ENCODE measurements at regions of chr11 and their contacts with region 1.

Region 1: GRCh38 chr11:2305140-2305840 is 3.5 kb downstream of the TSPAN32 start:
- DNase-seq: peak; percentile 88 to 92
- ATAC-seq: peak; percentile 33 to 73 (median 51)
- H3K4me3 ChIP-seq: peak overlapping the region in 5 of 10 donors; percentile 20 to 34 (median 27)
- H3K27ac ChIP-seq: peak overlapping the region; percentile 8 to 96 (median 90)
- H3K4me1 ChIP-seq: peaks cover 21 to 64% (median 38%) of the 10 kb centered on the region in 9 donors
- H3K27me3 ChIP-seq: no peaks in the 10 kb centered on the region
- CTCF ChIP-seq: peak; percentile 80 to 96 (median 93)

Region 2: GRCh38 chr11:2196970-2197770 is 108.1 kb before region 1 on chr11:
- intact Hi-C with region 1: loop called in 5 of 10 experiments (anchors 1 to 5 kb)
- DNase-seq: peak; percentile 66 to 76
- ATAC-seq: peak; percentile 59 to 86 (median 80)
- H3K4me3 ChIP-seq: no peak overlapping the region
- H3K27ac ChIP-seq: no peak overlapping the region
- H3K4me1 ChIP-seq: peaks cover 0 to 11% (median 0%) of the 10 kb centered on the region in 9 donors
- H3K27me3 ChIP-seq: peaks cover 0 to 12% (median 7%) of the 10 kb centered on the region in 7 donors
- CTCF ChIP-seq: peak; percentile 53 to 85 (median 81)

Region 3: DNA sequence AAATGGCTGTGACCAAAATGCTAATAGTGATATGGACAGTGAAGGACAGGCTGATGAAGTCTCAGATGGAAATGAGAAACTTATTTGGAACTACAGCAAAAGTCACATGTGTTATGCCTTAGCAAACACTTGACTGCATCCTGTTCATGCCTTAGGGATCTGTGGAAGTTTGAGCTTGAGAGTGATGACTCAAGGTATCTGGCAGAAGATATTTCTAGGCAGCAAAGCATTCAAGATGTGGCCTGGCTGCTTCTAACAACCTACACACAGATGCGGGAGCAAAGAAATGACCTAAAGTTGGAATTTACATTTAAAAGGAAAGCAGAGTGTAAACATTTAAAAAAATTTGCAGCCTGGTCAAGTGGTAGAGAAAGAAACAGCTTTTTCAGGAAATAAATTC is 43.7 kb after region 1 on chr11:
- intact Hi-C with region 1: no loop called
- DNase-seq: no peak
- ATAC-seq: no peak
- H3K4me3 ChIP-seq: no peak overlapping the region
- H3K27ac ChIP-seq: no peak overlapping the region
- H3K4me1 ChIP-seq: no peaks in the 10 kb centered on the region
- H3K27me3 ChIP-seq: no peaks in the 10 kb centered on the region
- CTCF ChIP-seq: no peak

Region 4: DNA sequence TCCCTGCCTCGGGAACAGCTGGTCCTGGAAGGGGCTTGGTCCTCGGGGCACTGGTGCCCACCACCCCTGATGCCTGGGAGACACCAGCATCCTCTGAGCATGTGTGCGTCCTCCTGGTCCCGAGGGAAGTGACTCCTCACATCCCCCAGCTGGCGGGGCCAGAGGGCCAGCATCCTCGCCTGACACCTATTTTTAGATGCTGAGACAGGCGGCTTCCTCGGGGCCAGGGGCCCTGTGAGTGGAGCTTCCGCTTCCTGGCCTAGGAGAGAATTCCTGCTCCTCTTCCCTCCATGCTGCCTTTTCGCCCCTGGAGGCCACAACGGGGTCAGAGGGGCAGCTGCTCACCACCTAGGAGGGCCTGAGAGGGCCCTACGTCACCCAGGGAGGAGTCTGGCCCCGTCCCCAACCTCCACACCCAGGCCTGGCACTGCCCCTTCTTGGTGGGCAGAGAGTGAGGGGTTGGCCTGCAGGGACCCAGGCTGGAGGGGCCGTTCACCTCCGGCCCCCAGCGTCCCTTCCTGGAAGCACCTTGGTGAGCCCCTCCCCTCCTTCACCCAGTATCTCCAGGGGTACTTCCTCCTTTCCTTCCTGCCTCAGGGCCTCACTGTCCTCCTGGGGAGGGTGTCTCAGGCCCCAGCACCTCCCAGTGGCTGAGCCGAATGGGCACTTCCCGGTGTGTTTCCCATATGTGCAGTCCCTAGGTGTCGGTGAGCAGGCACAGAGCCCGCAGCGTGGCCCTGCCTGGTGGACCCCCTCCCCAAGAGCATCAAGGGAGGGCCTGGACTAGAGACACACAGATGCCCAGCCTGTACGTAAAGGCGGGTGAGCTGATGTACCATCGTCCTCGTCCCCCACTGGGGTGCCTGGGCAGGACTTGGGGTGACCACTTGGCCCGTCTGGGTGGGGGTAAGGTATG is 77.9 kb after region 1 on chr11:
- intact Hi-C with region 1: loop called in 5 of 10 experiments (anchors 5 to 10 kb)
- DNase-seq: peak; percentile 79 to 88
- ATAC-seq: peak; percentile 45 to 74 (median 64)
- H3K4me3 ChIP-seq: peak overlapping the region in 7 of 10 donors; percentile 10 to 35 (median 25)
- H3K27ac ChIP-seq: peak overlapping the region; percentile 76 to 100 (median 98)
- H3K4me1 ChIP-seq: peaks cover 73 to 97% (median 91%) of the 10 kb centered on the region in 9 donors
- H3K27me3 ChIP-seq: no peaks in the 10 kb centered on the region
- CTCF ChIP-seq: peak in 5 of 9 donors; percentile 11 to 47 (median 28)

Region 5: GRCh38 chr11:2409611-2410468 is 104.5 kb after region 1 on chr11:
- intact Hi-C with region 1: loop called in 2 of 10 experiments (anchors 5 kb)
- DNase-seq: no peak
- ATAC-seq: no peak
- H3K4me3 ChIP-seq: no peak overlapping the region
- H3K27ac ChIP-seq: no peak overlapping the region
- H3K4me1 ChIP-seq: no peaks in the 10 kb centered on the region
- H3K27me3 ChIP-seq: no peaks in the 10 kb centered on the region
- CTCF ChIP-seq: no peak

Region 6: DNA sequence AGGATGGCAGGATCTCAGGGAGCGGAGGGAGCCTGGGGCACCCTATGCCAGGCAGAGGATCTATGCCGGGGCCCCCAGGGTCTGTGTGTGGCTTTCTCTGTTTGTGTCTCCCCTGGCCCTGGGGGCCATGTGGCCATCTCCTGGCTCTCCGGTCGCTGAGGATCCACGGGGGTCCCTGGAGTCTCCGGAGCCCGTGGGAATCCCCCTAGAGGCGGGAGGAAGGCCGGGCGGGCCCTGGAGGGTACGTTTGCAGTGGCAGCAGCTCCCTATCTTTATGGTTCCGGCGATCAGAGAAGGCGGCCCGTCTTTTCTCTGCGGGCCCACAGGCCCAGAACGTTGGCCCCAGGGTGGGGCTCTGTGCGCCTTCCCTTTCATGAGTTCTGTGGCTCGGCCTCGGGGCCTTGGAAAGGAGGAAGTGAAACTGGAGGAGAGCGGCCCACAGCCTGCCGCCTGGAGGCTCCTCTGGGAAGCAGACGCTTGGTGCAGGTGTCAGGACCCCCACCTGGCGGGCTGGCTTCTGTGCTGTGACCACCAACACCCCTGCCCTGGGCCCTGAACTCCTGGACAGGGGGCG is 221.6 kb after region 1 on chr11:
- intact Hi-C with region 1: loop called in 6 of 10 experiments (anchors 10 kb)
- DNase-seq: peak; percentile 39 to 54
- ATAC-seq: peak in 6 of 8 donors; percentile 19 to 47 (median 30)
- H3K4me3 ChIP-seq: peak overlapping the region in 6 of 10 donors; percentile 2 to 34 (median 16)
- H3K27ac ChIP-seq: peak overlapping the region in 4 of 10 donors; percentile 39 to 64 (median 47)
- H3K4me1 ChIP-seq: peaks cover 7 to 30% (median 20%) of the 10 kb centered on the region in 9 donors
- H3K27me3 ChIP-seq: no peaks in the 10 kb centered on the region
- CTCF ChIP-seq: peak in 4 of 9 donors; percentile 19 to 32 (median 24)

Region 7: GRCh38 chr11:2885676-2886081 is 580.4 kb after region 1 on chr11 and contains the start of gene CDKN1C:
- intact Hi-C with region 1: loop called in 5 of 10 experiments (anchors 5 to 10 kb)
- DNase-seq: peak; percentile 88 to 91
- ATAC-seq: peak; percentile 72 to 84 (median 80)
- H3K4me3 ChIP-seq: peak within 1 kb of the TSS; percentile 63 to 89 (median 78)
- H3K27ac ChIP-seq: peak within 1 kb of the TSS; percentile 80 to 94 (median 86)
- H3K4me1 ChIP-seq: peaks cover 5 to 55% (median 39%) of the 10 kb centered on the region in 9 donors
- H3K27me3 ChIP-seq: peaks cover 0 to 34% (median 0%) of the 10 kb centered on the region in 7 donors
- CTCF ChIP-seq: no peak
- total RNA-seq, gene CDKN1C: 16.9 to 48.0 (median 25.4) TPM